ENCODE measurements at regions of chr7 and their contacts with region 1.

Region 1: GRCh38 chr7:23254051-23254681 is 7.6 kb downstream of the GPNMB start:
- DNase-seq: no peak
- H3K4me3 ChIP-seq: no peak overlapping the region
- CTCF ChIP-seq: no peak

Region 2: GRCh38 chr7:23181684-23182553 is 72.2 kb before region 1 on chr7 and contains the start of gene NUP42:
- CTCF ChIA-PET with region 1: interaction called, 54 read pairs
- POLR2A ChIA-PET with region 1: no interaction called
- DNase-seq: peak; percentile 96
- H3K4me3 ChIP-seq: peak within 1 kb of the TSS; percentile 97
- CTCF ChIP-seq: no peak

Region 3: DNA sequence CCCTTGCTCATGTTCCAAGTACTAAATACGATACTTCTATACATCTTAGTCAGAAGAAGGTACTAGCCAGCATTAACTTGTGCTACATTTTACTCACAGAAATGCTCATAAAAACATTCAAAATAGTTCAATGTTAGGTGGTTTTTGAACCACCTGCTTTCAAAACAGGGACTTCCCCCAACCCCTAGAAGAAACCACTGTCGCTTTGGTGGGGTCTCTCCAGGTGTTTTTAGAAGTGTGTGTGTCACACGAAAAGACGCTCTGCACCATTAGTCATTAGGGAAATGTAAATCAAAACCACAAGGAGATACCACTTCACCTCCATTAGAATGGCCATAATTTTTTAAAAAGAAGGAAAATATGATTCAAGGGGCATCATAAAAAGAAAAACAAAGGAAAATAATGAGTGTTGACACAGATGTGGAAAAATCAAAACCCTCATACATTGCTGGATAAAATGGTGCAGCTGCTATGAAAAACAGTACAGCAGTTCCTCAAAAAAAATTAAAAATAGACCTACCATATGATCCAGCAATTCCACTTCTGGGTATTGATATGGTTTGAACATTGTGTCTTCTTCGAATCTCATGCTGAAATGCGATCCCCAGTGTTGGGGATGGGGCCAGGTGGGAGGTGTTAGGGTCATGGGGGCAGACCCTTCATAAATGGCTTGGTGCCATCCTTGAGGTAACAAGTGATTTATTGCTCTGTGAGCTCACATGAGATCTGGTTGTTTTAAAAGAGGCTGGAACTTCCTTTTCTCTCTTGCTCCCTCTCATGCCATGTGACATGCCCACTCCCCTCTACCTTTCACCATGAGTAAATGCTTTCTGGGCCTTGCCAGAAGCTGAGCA is 119.2 kb after region 1 on chr7:
- CTCF ChIA-PET with region 1: no interaction called
- POLR2A ChIA-PET with region 1: no interaction called
- DNase-seq: no peak
- H3K4me3 ChIP-seq: no peak overlapping the region
- CTCF ChIP-seq: no peak

Measured in AG04449 (cell line).